Naive thymus-derived CD4-positive, alpha-beta T cell (primary cell): ENCODE measurements at regions of chr19 and their contacts with region 1.

Region 1: DNA sequence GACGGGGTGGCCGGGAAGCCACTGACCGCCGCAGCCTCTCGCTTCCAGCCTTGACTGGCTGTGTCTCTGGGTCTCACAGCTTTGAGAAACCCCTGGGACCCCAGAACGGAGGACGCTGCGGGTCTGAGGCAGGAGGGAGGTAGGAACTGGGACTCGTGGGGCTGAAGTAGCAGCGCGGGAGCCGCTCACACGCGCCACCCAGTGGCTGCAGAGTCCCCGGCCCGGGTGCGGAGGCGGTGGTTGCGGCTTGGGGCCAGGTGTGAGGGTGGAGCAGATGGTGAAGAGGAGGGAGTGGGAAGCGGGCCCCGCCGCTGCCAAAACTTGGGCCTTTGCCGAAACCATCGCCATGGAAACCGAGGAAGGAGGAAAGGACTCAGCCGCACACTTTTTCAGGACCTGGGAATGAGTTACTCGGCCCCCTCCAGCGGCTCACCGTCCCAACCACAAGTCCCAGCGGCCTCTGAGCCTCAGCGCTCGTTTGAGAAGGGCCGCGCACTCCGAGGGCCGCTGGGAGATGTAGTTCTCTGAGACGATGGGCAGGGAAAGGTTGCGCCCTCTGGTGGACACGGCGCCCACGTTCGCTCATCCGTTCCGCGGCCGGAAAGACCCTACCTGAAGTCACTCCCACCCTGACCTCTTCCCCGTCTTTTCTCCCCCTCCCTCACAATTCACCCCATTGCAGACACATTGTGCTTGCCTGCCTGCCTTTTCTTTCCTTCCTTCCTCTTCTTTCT is 2.2 kb upstream of the SLC17A7 start:
- DNase-seq: peak; percentile 90 to 98 (median 95)
- ATAC-seq: peak; percentile 96
- H3K4me3 ChIP-seq: peak overlapping the region; percentile 57
- H3K4me3 Mint-ChIP-seq: peak overlapping the region; percentile 75 to 88 (median 83)
- H3K27ac ChIP-seq: peak overlapping the region; percentile 51
- H3K27ac Mint-ChIP-seq: peak overlapping the region; percentile 59 to 91 (median 83)
- H3K4me1 ChIP-seq: peaks cover 12 to 15% of the 10 kb centered on the region in 2 donors
- H3K4me1 Mint-ChIP-seq: peaks cover 29 to 54% (median 37%) of the 10 kb centered on the region in 7 donors
- H3K27me3 ChIP-seq: peaks cover 23 to 32% of the 10 kb centered on the region in 2 donors
- H3K27me3 Mint-ChIP-seq: peaks cover 36 to 48% (median 39%) of the 10 kb centered on the region in 5 donors

Region 2: GRCh38 chr19:49085020-49085867 is 358.3 kb before region 1 on chr19 and contains the start of gene SNRNP70:
- CTCF ChIA-PET with region 1: no interaction called
- POLR2A ChIA-PET with region 1: no interaction called
- intact Hi-C with region 1: loop called in 1 of 2 experiments (anchors 1 kb)
- DNase-seq: peak; percentile 99 to 100 (median 100)
- ATAC-seq: peak; percentile 97
- H3K4me3 ChIP-seq: peak within 1 kb of the TSS; percentile 72
- H3K4me3 Mint-ChIP-seq: peak within 1 kb of the TSS; percentile 71 to 97 (median 94)
- H3K27ac ChIP-seq: peak within 1 kb of the TSS; percentile 94
- H3K27ac Mint-ChIP-seq: peak within 1 kb of the TSS; percentile 83 to 96 (median 88)
- H3K4me1 ChIP-seq: peaks cover 19% of the 10 kb centered on the region in 2 donors
- H3K4me1 Mint-ChIP-seq: peaks cover 18 to 49% (median 35%) of the 10 kb centered on the region in 7 donors
- H3K27me3 ChIP-seq: no peaks in the 10 kb centered on the region
- H3K27me3 Mint-ChIP-seq: peaks cover 0 to 5% (median 4%) of the 10 kb centered on the region in 5 donors
- total RNA-seq, gene SNRNP70: 243 to 837 (median 449) TPM

Region 3: GRCh38 chr19:49272184-49272583 is 171.3 kb before region 1 on chr19:
- CTCF ChIA-PET with region 1: interaction called, 5 read pairs
- POLR2A ChIA-PET with region 1: no interaction called
- intact Hi-C with region 1: loop called in 1 of 2 experiments (anchors 2 kb)
- DNase-seq: no peak
- ATAC-seq: no peak
- H3K4me3 ChIP-seq: no peak overlapping the region
- H3K4me3 Mint-ChIP-seq: no peak overlapping the region
- H3K27ac ChIP-seq: no peak overlapping the region
- H3K27ac Mint-ChIP-seq: no peak overlapping the region
- H3K4me1 ChIP-seq: no peaks in the 10 kb centered on the region
- H3K4me1 Mint-ChIP-seq: peaks cover 0 to 2% (median 0%) of the 10 kb centered on the region in 7 donors
- H3K27me3 ChIP-seq: no peaks in the 10 kb centered on the region
- H3K27me3 Mint-ChIP-seq: peaks cover 0 to 26% (median 15%) of the 10 kb centered on the region in 5 donors

Region 4: GRCh38 chr19:49363268-49364082 is 80.1 kb before region 1 on chr19 and contains the start of gene DKKL1:
- CTCF ChIA-PET with region 1: no interaction called
- POLR2A ChIA-PET with region 1: no interaction called
- intact Hi-C with region 1: loop called (anchors 1 kb)
- DNase-seq: peak; percentile 33 to 84 (median 62)
- ATAC-seq: peak; percentile 93
- H3K4me3 ChIP-seq: peak within 1 kb of the TSS; percentile 47
- H3K4me3 Mint-ChIP-seq: peak within 1 kb of the TSS in 1 of 10 donors; percentile 45
- H3K27ac ChIP-seq: no peak within 1 kb of the TSS
- H3K27ac Mint-ChIP-seq: peak within 1 kb of the TSS in 1 of 9 donors; percentile 70
- H3K4me1 ChIP-seq: peaks cover 11 to 28% of the 10 kb centered on the region in 2 donors
- H3K4me1 Mint-ChIP-seq: peaks cover 5 to 21% (median 12%) of the 10 kb centered on the region in 7 donors
- H3K27me3 ChIP-seq: peaks cover 5 to 18% of the 10 kb centered on the region in 2 donors
- H3K27me3 Mint-ChIP-seq: peaks cover 0 to 36% (median 16%) of the 10 kb centered on the region in 5 donors
- total RNA-seq, gene DKKL1: not detected

Region 5: DNA sequence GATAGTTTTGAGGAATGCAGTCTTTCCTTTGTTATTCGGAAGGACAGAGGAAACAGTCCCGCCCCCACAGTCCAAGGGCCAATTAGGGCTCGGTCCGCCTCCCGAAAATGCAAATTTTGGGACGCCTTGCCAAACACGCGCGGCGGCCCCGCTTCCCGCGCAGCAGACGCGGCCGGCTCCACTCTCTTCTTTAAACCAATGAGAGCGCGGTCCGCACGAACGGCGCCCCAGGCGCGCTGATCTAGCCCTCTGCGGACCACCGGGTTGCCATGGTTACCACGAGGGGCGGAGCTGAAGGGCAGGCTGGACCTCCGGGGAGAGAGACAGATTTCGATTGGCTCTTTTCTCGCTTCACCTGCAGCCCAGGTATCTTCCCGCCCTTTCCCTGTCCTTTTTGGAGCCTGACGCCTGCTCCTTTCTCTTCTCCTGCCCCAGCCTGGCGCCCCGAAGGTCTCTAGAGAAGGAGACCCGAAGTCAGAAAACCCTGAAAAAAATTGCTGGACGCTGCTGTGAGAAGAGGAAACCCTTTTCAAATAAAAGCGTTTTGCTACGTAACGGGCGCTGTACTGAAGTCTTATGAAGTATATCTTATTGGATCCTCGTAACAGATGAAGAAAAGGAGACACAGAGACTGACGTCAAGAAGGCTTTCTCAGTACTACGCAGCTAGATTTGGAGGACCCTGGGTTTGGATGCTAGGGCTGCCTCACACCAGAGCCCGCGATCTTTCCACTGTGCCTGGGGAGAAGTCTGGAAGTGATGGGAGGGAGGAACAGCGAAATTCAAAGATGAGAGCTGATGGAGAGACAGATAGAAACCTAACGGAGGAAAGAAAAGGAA is 22.3 kb before region 1 on chr19:
- CTCF ChIA-PET with region 1: interaction called, 4 read pairs
- POLR2A ChIA-PET with region 1: no interaction called
- intact Hi-C with region 1: loop called (anchors 1 to 2 kb)
- DNase-seq: peak in 2 of 9 donors; percentile 24 to 59
- ATAC-seq: peak; percentile 57
- H3K4me3 ChIP-seq: no peak overlapping the region
- H3K4me3 Mint-ChIP-seq: peak overlapping the region in 9 of 10 donors; percentile 53 to 96 (median 64)
- H3K27ac ChIP-seq: no peak overlapping the region
- H3K27ac Mint-ChIP-seq: peak overlapping the region in 3 of 9 donors; percentile 48 to 89 (median 86)
- H3K4me1 ChIP-seq: peaks cover 29 to 30% of the 10 kb centered on the region in 2 donors
- H3K4me1 Mint-ChIP-seq: peaks cover 43 to 49% (median 46%) of the 10 kb centered on the region in 7 donors
- H3K27me3 ChIP-seq: peaks cover 22 to 31% of the 10 kb centered on the region in 2 donors
- H3K27me3 Mint-ChIP-seq: peaks cover 62 to 89% (median 82%) of the 10 kb centered on the region in 5 donors

Region 6: GRCh38 chr19:49473868-49474544 is 30.5 kb after region 1 on chr19 and contains the start of gene FLT3LG:
- CTCF ChIA-PET with region 1: interaction called, 83 read pairs
- POLR2A ChIA-PET with region 1: interaction called, 226 read pairs
- intact Hi-C with region 1: loop called (anchors 1 kb)
- DNase-seq: peak; percentile 91 to 98 (median 96)
- ATAC-seq: peak; percentile 72
- H3K4me3 ChIP-seq: peak within 1 kb of the TSS; percentile 87
- H3K4me3 Mint-ChIP-seq: peak within 1 kb of the TSS; percentile 91 to 100 (median 96)
- H3K27ac ChIP-seq: peak within 1 kb of the TSS; percentile 99
- H3K27ac Mint-ChIP-seq: peak within 1 kb of the TSS; percentile 95 to 100 (median 98)
- H3K4me1 ChIP-seq: peaks cover 50 to 52% of the 10 kb centered on the region in 2 donors
- H3K4me1 Mint-ChIP-seq: peaks cover 18 to 62% (median 51%) of the 10 kb centered on the region in 7 donors
- H3K27me3 ChIP-seq: no peaks in the 10 kb centered on the region
- H3K27me3 Mint-ChIP-seq: no peaks in the 10 kb centered on the region
- total RNA-seq, gene FLT3LG: 90.6 to 401 (median 280) TPM